HepG2 (cell line): ENCODE measurements at regions of chr3 and their contacts with region 1.

Region 1: GRCh38 chr3:107581230-107581629 is 58.5 kb downstream of the BBX start:
- DNase-seq: no peak
- ATAC-seq: no peak
- H3K4me3 ChIP-seq: no peak overlapping the region
- H3K27ac ChIP-seq: no peak overlapping the region
- H3K4me1 ChIP-seq: no peaks in the 10 kb centered on the region
- H3K27me3 ChIP-seq: no peaks in the 10 kb centered on the region
- CTCF ChIP-seq: no peak
- EP300 ChIP-seq: no peak
- POLR2A ChIP-seq: no peak
- RAD21 ChIP-seq: no peak

Region 2: DNA sequence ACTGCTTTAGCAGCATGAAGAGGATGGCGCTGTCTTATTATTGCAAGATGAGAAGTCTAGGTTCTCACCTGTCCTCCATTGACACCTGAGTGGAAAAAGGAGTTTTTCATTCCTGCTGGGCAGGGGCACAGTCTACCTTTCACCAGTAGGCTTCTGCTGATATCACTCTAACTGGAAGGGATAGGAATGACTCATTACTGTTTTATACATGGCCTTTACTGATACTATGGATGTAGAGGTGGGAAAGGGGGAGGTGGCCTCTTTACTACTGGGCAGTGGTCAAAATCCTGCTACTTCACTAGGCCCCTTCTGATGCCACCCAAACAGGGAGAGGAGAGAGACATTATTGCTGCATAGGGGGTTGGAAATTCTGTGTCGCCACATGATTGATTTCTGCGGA is 39.3 kb after region 1 on chr3:
- CTCF ChIA-PET with region 1: no interaction called
- POLR2A ChIA-PET with region 1: no interaction called
- in situ Hi-C with region 1: no loop called
- intact Hi-C with region 1: loop called (anchors 5 kb)
- DNase-seq: no peak
- ATAC-seq: no peak
- H3K4me3 ChIP-seq: no peak overlapping the region
- H3K27ac ChIP-seq: no peak overlapping the region
- H3K4me1 ChIP-seq: peaks cover 6% of the 10 kb centered on the region
- H3K27me3 ChIP-seq: no peaks in the 10 kb centered on the region
- CTCF ChIP-seq: no peak
- EP300 ChIP-seq: no peak
- POLR2A ChIP-seq: no peak
- RAD21 ChIP-seq: no peak